ENCODE measurements at regions of chr2 and their contacts with region 1.

Region 1: GRCh38 chr2:32951672-32952071 is 4.9 kb downstream of the LTBP1 start:
- DNase-seq: no peak
- ATAC-seq: no peak
- H3K4me3 ChIP-seq: no peak overlapping the region
- H3K27ac ChIP-seq: no peak overlapping the region
- H3K4me1 ChIP-seq: peaks cover 6% of the 10 kb centered on the region
- H3K27me3 ChIP-seq: no peaks in the 10 kb centered on the region
- CTCF ChIP-seq: no peak

Region 2: DNA sequence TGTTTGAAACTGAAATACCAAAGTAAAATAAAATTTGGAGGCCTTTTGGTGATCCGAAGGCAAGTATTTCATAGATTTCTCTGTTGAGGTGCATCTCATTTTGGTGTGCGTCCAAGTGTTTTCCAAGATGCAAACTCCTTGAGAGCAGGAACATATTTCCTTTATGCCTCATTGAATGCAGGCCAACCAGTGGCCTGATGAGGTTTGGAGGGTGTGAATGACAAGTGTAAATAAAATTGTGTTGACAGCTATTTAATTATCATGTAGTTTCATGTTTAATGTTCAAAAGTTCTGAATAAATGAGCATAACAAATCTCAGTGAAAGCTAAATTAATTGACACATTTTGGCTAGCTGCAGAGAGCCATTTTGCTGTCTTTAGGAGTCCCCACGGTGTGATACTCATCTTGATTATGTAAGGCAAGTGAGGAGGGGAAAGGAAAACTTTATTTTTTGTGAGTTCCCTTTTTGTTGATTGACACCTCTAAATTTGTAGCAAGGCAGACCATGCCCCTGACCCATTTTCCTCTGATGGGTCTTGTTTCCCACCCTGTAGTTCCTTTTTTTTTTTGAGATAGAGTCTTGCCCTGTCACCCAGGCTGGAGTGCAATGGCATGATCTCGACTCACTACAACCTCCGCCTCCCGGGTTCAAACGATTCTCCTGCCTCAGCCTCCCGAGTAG is 11.2 kb before region 1 on chr2:
- intact Hi-C with region 1: loop called in 1 of 2 experiments (anchors 1 kb)
- DNase-seq: no peak
- ATAC-seq: no peak
- H3K4me3 ChIP-seq: no peak overlapping the region
- H3K27ac ChIP-seq: no peak overlapping the region
- H3K4me1 ChIP-seq: no peaks in the 10 kb centered on the region
- H3K27me3 ChIP-seq: peaks cover 0 to 6% (median 0%) of the 10 kb centered on the region in 3 donors
- CTCF ChIP-seq: no peak

Region 3: GRCh38 chr2:33015421-33016142 is 63.9 kb after region 1 on chr2:
- intact Hi-C with region 1: loop called (anchors 5 kb)
- DNase-seq: no peak
- ATAC-seq: peak in 3 of 4 donors; percentile 56 to 86 (median 60)
- H3K4me3 ChIP-seq: no peak overlapping the region
- H3K27ac ChIP-seq: peak overlapping the region; percentile 47
- H3K4me1 ChIP-seq: peaks cover 13% of the 10 kb centered on the region
- H3K27me3 ChIP-seq: no peaks in the 10 kb centered on the region
- CTCF ChIP-seq: no peak